ENCODE measurements at regions of chr10 and their contacts with region 1.

Region 1: GRCh38 chr10:124827474-124827873 is 25.9 kb downstream of the ABRAXAS2 start:
- DNase-seq: no peak
- ATAC-seq: no peak
- H3K4me3 Mint-ChIP-seq: no peak overlapping the region
- H3K27ac Mint-ChIP-seq: no peak overlapping the region
- H3K4me1 Mint-ChIP-seq: no peaks in the 10 kb centered on the region
- H3K27me3 Mint-ChIP-seq: no peaks in the 10 kb centered on the region

Region 2: GRCh38 chr10:124530215-124530665 is 297.2 kb before region 1 on chr10:
- CTCF ChIA-PET with region 1: interaction called, 30 read pairs
- DNase-seq: peak; percentile 91
- ATAC-seq: peak; percentile 99
- H3K4me3 Mint-ChIP-seq: no peak overlapping the region
- H3K27ac Mint-ChIP-seq: no peak overlapping the region
- H3K4me1 Mint-ChIP-seq: peaks cover 4% of the 10 kb centered on the region
- H3K27me3 Mint-ChIP-seq: no peaks in the 10 kb centered on the region